MCF 10A (cell line): ENCODE measurements at regions of chr1 and their contacts with region 1.

Region 1: GRCh38 chr1:200971955-200972711 is 51.4 kb downstream of the KIF21B start:
- DNase-seq: peak; percentile 80
- H3K4me3 Mint-ChIP-seq: no peak overlapping the region
- H3K27ac Mint-ChIP-seq: no peak overlapping the region
- H3K4me1 Mint-ChIP-seq: peaks cover 14% of the 10 kb centered on the region
- H3K27me3 Mint-ChIP-seq: no peaks in the 10 kb centered on the region
- CTCF ChIP-seq: peak; percentile 100

Region 2: DNA sequence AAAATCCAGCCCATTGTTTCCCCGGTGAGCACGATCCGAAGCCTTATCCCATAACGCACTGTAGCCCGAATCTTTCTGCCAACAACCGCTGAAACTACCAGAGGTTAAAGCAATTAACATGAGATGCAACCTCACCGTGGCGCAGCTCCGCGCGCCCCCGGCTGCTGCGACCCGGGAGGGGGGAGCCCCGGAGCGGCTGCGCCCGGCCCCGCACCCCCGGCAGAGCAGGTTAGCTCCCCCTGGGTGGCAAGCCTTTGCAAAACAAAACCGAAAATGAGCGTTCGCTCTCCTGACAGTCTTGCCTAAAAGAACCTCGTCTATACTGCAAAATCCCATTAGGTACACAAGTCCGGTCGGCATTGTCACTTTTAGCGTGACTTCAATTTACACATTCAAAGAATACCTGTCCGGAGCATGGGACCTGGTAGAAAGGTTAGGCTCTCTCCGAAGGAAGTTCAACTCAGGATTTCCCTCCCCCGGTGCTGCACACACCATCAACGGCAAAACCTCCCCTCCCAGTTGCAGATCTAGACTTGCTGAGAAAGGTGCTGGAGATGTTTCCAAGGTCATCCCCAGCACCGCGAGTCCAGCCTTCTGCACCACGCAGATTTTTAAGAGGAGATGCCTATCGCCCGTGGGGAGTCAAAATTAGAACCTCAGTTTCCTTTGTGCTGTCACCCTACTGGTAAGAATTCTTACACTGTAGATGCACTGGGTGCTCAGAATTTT is 669.8 kb before region 1 on chr1:
- CTCF ChIA-PET with region 1: no interaction called
- POLR2A ChIA-PET with region 1: no interaction called
- intact Hi-C with region 1: no loop called
- DNase-seq: peak; percentile 49
- H3K4me3 Mint-ChIP-seq: peak overlapping the region; percentile 73
- H3K27ac Mint-ChIP-seq: no peak overlapping the region
- H3K4me1 Mint-ChIP-seq: peaks cover 2% of the 10 kb centered on the region
- H3K27me3 Mint-ChIP-seq: no peaks in the 10 kb centered on the region
- CTCF ChIP-seq: no peak

Region 3: DNA sequence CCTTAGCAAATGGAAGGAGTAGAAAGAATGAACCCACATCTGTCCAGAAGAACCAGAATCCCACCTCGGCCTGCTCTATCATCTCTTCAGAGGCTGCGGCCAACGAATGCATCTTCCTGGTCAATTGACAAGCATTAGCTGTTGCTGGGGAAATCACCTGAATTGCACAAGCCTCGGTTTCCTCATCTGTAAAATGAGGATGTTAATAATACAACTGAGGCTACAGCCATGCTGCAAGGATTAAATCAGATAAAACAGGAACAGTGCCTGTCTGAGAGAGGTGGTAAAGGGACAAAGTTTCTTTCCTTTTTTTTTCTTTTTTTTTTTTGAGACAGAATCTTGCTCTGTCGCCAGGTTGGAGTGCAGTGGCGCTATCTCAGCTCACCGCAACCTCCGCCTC is 451.4 kb before region 1 on chr1:
- CTCF ChIA-PET with region 1: no interaction called
- POLR2A ChIA-PET with region 1: no interaction called
- intact Hi-C with region 1: no loop called
- DNase-seq: no peak
- H3K4me3 Mint-ChIP-seq: no peak overlapping the region
- H3K27ac Mint-ChIP-seq: no peak overlapping the region
- H3K4me1 Mint-ChIP-seq: no peaks in the 10 kb centered on the region
- H3K27me3 Mint-ChIP-seq: peaks cover 4% of the 10 kb centered on the region
- CTCF ChIP-seq: no peak

Region 4: DNA sequence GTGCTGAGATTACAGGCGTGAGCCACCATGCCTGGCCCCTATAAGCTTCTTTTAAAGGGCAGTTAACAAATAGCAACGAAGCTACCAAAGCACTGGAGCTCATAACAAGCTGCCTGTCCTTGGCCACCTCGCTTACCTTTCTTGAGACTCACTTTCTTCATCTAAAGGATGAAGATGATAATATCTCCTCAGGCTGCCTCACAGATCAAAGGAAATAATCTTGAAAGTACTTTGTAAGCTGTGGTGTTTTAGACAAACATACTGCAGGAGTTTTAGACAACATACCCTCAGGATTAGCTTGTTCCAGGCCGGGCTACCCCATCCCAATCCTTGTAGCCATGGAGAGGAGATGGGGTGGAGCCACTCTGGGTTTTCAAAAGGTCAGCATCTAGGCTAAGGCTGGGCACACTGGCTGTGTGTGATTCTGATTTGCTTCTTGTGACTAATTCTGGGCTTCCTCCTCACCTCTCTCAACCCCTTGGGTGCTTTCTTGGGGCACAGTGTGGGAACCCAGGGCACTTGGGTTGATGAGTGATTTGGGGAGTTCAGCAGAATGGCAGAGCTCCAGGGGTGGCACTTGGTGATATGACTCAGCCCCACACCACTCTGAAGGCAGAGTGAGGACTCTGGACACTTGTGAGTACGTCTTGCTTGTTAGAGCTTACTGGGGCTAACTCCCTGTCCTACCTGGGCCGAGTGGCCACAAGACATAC is 94.1 kb before region 1 on chr1:
- CTCF ChIA-PET with region 1: interaction called, 15 read pairs
- POLR2A ChIA-PET with region 1: interaction called, 3 read pairs
- intact Hi-C with region 1: no loop called
- DNase-seq: no peak
- H3K4me3 Mint-ChIP-seq: no peak overlapping the region
- H3K27ac Mint-ChIP-seq: no peak overlapping the region
- H3K4me1 Mint-ChIP-seq: no peaks in the 10 kb centered on the region
- H3K27me3 Mint-ChIP-seq: peaks cover 27% of the 10 kb centered on the region
- CTCF ChIP-seq: no peak

Region 5: DNA sequence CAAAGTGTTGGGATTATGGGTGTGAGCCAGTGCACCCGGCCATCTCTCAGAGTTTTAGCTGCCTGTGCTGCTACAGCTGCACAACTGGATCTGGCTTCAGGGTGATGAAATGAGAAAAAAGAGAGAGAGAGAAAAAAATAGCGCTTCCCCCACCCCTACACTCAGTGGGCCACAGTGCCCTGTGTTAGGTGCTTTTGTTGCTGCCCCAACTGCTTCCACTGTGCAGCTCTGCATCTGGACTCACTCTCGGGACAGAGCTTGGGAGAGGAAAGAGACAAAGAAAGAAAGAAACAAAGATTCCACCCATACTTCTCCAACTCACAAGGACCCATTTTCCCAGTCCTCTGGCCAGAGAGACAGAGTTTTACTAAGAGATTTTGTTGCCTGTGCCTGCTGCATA is 27.0 kb before region 1 on chr1:
- CTCF ChIA-PET with region 1: interaction called, 13 read pairs
- POLR2A ChIA-PET with region 1: no interaction called
- intact Hi-C with region 1: no loop called
- DNase-seq: no peak
- H3K4me3 Mint-ChIP-seq: no peak overlapping the region
- H3K27ac Mint-ChIP-seq: no peak overlapping the region
- H3K4me1 Mint-ChIP-seq: no peaks in the 10 kb centered on the region
- H3K27me3 Mint-ChIP-seq: no peaks in the 10 kb centered on the region
- CTCF ChIP-seq: no peak

Region 6: GRCh38 chr1:201009962-201010645 is 38.0 kb after region 1 on chr1:
- CTCF ChIA-PET with region 1: interaction called, 47 read pairs
- POLR2A ChIA-PET with region 1: no interaction called
- intact Hi-C with region 1: no loop called
- DNase-seq: no peak
- H3K4me3 Mint-ChIP-seq: no peak overlapping the region
- H3K27ac Mint-ChIP-seq: no peak overlapping the region
- H3K4me1 Mint-ChIP-seq: peaks cover 6% of the 10 kb centered on the region
- H3K27me3 Mint-ChIP-seq: no peaks in the 10 kb centered on the region
- CTCF ChIP-seq: no peak

Region 7: DNA sequence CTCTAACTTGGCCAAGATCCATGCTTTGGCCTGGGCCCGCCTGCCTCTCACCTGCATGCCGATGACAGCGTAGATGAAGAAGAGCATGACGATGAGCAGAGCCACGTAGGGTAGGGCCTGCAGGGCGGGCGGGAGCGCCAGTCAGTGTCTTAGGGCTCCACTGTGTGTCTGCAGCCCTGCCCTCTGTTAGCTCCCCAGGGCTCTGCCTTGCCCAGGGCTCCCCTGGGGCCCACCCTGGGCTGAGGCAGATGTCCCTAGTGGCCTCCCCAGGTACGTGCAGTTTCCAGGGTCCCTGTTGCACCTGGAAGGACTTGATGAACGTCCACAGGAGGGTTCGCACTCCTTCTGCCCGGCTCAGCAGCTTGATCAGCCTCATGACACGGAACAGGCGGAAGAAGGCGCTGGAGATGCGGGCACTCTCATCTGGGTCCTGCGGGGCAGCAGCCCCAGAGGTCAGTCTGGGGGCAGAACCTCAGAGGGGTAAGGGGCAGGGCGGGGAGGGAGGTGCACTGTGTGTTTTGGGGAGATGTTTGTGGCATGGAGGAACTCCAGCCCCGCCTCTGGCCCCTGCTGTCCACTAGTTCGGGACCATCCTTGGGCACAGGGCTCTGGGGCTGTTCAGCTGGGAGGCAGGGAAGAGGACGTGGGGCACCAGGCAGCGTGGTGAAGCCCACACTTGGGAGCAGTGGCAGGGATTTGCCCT is 81.2 kb after region 1 on chr1:
- CTCF ChIA-PET with region 1: interaction called, 21 read pairs
- POLR2A ChIA-PET with region 1: no interaction called
- intact Hi-C with region 1: no loop called
- DNase-seq: no peak
- H3K4me3 Mint-ChIP-seq: no peak overlapping the region
- H3K27ac Mint-ChIP-seq: no peak overlapping the region
- H3K4me1 Mint-ChIP-seq: no peaks in the 10 kb centered on the region
- H3K27me3 Mint-ChIP-seq: peaks cover 65% of the 10 kb centered on the region
- CTCF ChIP-seq: peak; percentile 22

Region 8: DNA sequence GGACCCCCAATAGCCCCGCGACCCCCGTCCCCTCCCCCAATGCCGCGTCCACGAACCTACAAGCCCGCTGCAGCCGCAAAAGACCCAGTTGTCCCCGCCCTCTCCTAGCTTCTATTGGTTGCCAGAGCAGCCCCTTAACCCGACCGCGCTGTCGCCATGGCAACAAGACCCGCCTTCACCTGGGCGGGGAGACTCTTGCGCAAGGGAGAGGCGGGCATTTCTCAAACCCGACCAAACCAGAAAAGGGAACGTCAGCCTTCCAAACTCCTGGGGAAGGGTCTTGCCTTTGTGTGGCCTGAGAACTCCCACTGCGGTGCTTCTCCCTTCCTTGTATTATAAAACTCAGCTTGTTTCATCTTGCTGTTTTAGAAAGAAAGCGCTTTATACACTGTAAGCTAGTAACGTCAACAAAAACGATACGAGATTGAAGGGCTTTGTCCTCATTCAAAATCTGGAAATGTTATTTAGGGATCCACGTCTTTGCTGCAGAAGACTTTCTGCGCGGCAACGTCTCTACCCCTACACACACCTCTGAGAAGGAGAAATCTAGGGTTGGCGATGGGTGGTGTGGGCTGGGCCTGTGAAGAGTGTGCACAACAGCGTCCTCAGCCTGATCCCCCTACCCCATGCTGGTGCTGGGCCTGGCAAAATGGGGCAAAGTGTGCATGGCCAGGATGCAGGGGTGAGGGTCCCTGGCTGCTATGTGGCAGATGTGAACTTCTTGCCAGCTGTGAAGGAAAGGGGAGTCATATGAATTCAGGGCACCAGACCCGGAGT is 182.4 kb after region 1 on chr1 and contains the start of gene TMEM9:
- CTCF ChIA-PET with region 1: interaction called, 12 read pairs
- POLR2A ChIA-PET with region 1: no interaction called
- intact Hi-C with region 1: no loop called
- DNase-seq: peak; percentile 99
- H3K4me3 Mint-ChIP-seq: peak within 1 kb of the TSS; percentile 82
- H3K27ac Mint-ChIP-seq: peak within 1 kb of the TSS; percentile 14
- H3K4me1 Mint-ChIP-seq: peaks cover 5% of the 10 kb centered on the region
- H3K27me3 Mint-ChIP-seq: peaks cover 12% of the 10 kb centered on the region
- CTCF ChIP-seq: no peak
- total RNA-seq, gene TMEM9: 67.2 and 71.7 TPM in 2 replicates